ENCODE measurements at regions of chr16 and their contacts with region 1.

Region 1: GRCh38 chr16:57185944-57186871 is at the starts of genes PSME3IP1 and RSPRY1:
- DNase-seq: peak; percentile 100
- H3K4me3 Mint-ChIP-seq: peak within 1 kb of the TSS; percentile 92
- H3K27ac Mint-ChIP-seq: peak within 1 kb of the TSS; percentile 81
- H3K4me1 Mint-ChIP-seq: peaks cover 36% of the 10 kb centered on the region
- H3K27me3 Mint-ChIP-seq: no peaks in the 10 kb centered on the region
- total RNA-seq, gene PSME3IP1: 101 to 102 TPM
- total RNA-seq, gene RSPRY1: 31.5 to 33.3 TPM

Region 2: DNA sequence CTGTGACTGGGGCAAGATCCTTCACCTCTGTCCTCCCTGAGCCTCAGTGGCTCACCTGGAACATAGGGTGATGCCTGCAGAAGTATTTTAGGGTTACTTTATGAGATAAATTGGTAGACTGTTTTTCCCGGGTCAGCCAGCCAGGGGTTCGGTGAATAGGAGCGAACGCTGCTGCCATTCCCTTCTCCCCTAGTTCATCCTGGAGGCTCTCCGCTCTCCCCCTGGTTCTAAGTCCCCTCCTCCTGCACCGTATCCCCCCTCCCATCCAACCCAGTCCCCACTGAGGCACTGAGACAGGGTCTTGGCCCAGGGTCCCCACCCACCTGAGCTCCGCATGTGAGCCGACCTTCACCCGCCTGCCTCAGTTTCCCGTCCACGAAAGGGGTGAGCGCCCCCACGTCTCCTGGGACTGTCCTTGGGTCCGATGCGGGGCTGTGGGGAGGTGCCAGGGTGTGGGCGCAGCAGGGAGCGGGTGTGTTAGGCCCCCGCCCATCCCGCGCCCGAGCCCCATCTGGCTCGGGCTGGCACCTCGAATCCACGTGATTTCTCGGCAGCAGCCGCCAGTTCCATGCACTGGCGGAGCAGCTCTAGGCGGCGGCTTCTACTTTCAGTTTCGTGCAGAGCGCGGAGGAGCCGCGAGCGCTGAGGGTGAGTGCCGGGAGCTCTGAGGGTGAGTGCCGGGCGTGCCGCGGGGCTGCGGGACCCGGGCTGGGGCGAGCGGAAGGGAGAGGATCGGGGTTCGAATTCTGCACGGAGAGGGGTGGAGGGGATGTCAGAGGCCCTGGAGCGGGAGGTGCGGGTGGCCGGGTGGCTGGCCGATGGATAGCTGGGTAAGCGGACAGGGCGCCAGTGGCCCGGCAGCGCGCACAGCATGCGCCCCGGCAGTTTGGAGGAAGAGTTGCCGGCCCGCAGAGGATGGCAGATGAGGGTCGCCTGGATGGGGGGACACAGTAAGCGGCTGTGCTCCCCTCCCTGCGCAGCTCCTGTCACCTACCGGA is 197.0 kb before region 1 on chr16 and contains the start of gene NLRC5:
- CTCF ChIA-PET with region 1: no interaction called
- POLR2A ChIA-PET with region 1: no interaction called
- intact Hi-C with region 1: loop called (anchors 5 kb)
- DNase-seq: peak; percentile 94
- H3K4me3 Mint-ChIP-seq: peak within 1 kb of the TSS; percentile 96
- H3K27ac Mint-ChIP-seq: peak within 1 kb of the TSS; percentile 99
- H3K4me1 Mint-ChIP-seq: peaks cover 66% of the 10 kb centered on the region
- H3K27me3 Mint-ChIP-seq: no peaks in the 10 kb centered on the region
- total RNA-seq, gene NLRC5: 151 to 167 TPM

Region 3: GRCh38 chr16:57084257-57084770 is 101.9 kb before region 1 on chr16:
- CTCF ChIA-PET with region 1: interaction called, 5 read pairs
- POLR2A ChIA-PET with region 1: no interaction called
- intact Hi-C with region 1: loop called (anchors 1 kb)
- DNase-seq: peak; percentile 85
- H3K4me3 Mint-ChIP-seq: no peak overlapping the region
- H3K27ac Mint-ChIP-seq: no peak overlapping the region
- H3K4me1 Mint-ChIP-seq: peaks cover 6% of the 10 kb centered on the region
- H3K27me3 Mint-ChIP-seq: no peaks in the 10 kb centered on the region

Region 4: DNA sequence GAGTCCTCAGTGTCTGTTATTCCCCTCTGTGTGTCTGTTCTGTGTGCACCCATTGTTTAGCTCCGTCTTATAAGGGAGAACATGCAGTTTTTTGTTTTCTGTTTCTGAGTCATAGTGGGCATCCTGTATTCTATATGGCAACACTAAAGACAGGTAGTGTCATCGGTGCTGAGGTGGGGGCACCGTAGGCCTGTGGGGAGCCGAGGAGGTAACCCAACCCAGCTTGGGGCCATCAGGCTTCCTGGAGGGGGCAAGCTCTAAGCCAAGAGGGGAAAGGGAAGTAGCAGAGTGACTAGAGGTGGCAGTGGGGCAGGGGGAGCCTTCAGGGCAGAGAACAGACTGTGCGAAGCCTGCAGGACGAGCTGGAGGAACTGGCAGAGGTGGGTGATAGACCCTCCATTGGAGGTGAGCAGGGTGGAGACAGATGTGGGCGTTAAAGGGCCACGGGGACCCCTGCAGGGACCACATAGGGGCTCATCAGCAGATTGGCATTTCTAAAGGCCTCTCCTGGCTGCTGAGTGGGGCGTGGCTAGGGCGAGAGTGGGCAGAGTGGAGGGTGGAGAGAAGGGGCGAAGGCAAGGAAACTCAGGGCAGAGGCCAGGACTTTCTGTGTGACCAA is 57.3 kb before region 1 on chr16:
- CTCF ChIA-PET with region 1: no interaction called
- POLR2A ChIA-PET with region 1: no interaction called
- intact Hi-C with region 1: loop called (anchors 5 kb)
- DNase-seq: peak; percentile 76
- H3K4me3 Mint-ChIP-seq: peak overlapping the region; percentile 33
- H3K27ac Mint-ChIP-seq: peak overlapping the region; percentile 74
- H3K4me1 Mint-ChIP-seq: peaks cover 70% of the 10 kb centered on the region
- H3K27me3 Mint-ChIP-seq: no peaks in the 10 kb centered on the region

Region 5: DNA sequence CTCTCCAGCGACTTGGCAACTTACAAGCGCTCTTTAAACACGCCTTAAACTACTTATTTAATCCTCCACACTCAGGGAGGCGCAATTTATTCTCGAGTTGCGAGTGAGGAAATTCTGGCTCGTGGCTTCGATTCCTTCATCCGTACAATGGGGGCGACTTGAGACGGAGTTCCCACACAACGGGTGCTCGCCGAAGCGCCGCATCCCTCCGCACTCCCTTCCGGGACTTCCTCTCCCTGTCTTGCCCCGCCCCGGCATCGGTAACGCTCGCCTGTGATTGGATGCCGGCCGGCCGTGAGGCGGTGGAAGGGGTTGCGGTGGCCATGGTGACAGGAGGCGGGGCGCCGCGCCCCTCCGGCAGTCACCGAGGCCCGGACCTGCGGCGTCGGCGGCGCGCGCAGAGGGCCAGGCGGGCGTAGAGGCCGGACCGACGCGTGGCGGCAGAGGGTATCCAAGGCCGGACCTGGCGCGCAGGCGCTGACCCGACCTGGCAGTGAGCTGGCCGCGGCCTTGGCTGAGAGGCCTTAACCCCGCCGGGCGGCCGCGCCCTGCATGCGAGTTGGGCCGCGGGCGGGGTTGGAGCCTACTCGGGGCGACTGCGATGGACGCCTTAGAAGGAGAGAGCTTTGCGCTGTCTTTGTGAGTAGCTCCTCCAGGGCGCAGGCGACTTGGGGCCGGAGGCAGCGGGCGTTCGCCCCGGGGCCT is 58.7 kb after region 1 on chr16 and contains the start of gene ARL2BP:
- CTCF ChIA-PET with region 1: no interaction called
- POLR2A ChIA-PET with region 1: no interaction called
- intact Hi-C with region 1: loop called (anchors 1 kb)
- DNase-seq: peak; percentile 99
- H3K4me3 Mint-ChIP-seq: peak within 1 kb of the TSS; percentile 89
- H3K27ac Mint-ChIP-seq: peak within 1 kb of the TSS; percentile 88
- H3K4me1 Mint-ChIP-seq: peaks cover 16% of the 10 kb centered on the region
- H3K27me3 Mint-ChIP-seq: no peaks in the 10 kb centered on the region
- total RNA-seq, gene ARL2BP: 16.4 to 16.9 TPM

Region 6: DNA sequence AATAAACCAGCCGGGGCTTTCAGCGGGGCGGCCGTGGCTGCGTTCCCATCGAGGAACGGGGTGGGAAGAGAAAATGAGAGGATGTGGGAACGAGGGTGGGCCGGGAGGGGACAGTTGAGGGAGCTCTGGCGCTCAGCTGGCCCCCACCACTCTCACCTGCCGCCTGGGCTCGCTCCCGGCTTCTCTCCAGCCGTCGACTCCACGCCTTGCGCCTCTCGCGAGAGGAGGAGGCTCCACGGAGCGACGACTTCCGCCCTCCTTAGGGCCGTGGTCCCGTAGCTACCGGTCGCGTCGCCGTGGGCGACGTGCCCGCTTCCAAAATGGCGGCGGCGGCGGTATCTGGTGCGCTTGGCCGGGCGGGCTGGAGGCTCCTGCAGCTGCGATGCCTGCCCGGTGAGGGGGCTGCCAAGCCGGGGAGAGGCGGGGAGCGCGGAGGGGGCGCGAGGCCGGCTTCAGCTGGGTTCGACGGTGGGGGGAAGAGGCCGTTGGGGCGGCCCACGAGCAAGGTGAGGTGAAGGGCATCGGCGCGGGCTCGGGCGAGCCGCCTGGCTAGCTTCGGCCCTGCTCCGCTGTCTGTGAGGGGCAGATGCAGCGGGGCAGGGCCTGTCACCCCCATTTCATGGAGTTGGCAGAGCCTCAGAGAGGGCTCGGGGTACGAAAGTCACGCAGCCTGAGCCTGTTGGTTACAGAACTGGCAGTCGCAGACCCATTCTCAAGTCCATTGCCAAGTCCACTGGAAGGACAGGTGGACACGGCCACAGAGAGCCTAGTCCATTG is 261.2 kb after region 1 on chr16 and contains the starts of genes CIAPIN1 and COQ9:
- CTCF ChIA-PET with region 1: no interaction called
- POLR2A ChIA-PET with region 1: no interaction called
- intact Hi-C with region 1: loop called (anchors 2 kb)
- DNase-seq: peak; percentile 96
- H3K4me3 Mint-ChIP-seq: peak within 1 kb of the TSS; percentile 91
- H3K27ac Mint-ChIP-seq: peak within 1 kb of the TSS; percentile 70
- H3K4me1 Mint-ChIP-seq: peaks cover 28% of the 10 kb centered on the region
- H3K27me3 Mint-ChIP-seq: no peaks in the 10 kb centered on the region
- total RNA-seq, gene CIAPIN1: 34.8 to 38.5 TPM
- total RNA-seq, gene COQ9: 29.8 to 33.0 TPM

Measured in activated CD4-positive, alpha-beta memory T cell treated with anti-CD3 and anti-CD28 coated beads for 36 hours (primary cell).